ENCODE measurements at regions of chr6 and their contacts with region 1.

Region 1: DNA sequence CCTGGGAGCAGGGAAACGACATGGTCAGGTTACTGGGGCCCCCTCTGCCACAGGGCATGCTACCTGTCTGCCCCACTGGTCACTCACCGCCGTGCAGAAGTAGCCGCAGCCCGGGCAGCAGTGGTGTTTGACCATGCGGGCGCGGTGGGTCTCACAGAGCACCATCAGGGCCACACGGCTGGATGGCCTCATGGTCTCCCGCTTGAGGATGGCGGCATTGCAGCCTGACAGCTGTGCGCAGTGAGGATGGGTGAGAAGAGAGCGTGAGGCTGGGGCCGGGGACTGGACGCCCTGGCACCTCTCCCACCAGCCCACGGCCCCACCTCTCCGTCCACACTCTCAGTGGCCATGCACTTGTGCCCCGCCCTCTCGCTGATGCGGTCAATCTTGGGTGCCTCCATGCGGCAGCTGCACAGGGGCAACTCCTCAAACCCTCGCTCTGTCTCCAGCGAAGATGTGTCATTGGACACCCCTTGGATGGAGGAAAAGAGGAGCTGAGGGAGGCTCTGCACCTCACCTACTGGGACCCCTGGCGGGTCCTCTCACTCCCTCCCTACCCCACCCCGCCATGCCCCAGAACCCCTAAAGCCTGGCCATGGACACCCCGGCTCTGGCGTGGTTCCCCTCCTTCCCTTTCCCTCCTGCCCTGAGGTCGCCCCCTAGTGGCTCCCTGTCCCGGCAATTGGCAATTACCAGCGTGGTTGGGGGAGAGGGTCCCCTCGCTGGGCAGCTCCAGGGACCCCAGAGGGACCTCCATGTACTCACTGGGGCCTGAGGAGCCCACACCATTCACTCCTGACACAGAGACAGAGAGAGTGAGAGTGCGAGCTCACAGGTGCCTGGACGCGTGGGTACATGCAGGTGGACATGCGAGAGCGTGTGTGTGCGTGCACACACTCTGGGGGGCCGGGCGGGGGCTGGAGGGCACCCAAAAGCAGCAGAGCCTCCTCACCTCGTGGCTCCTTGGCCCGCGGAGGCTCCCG is 8.9 kb downstream of the EHMT2 start:
- DNase-seq: peak; percentile 75
- CTCF ChIP-seq: peak; percentile 78

Region 2: GRCh38 chr6:31877125-31877650 is 11.4 kb before region 1 on chr6:
- CTCF ChIA-PET with region 1: interaction called, 12 read pairs
- POLR2A ChIA-PET with region 1: no interaction called
- DNase-seq: no peak
- CTCF ChIP-seq: no peak